Activated CD8-positive, alpha-beta T cell treated with anti-CD3 and anti-CD28 coated beads, Interleukin-2, amount 10 ng/mL, durations not matched to agents 7 days and 5 days (primary cell): ENCODE measurements at regions of chr19 and their contacts with region 1.

Region 1: GRCh38 chr19:13861732-13862531 is 15.0 kb upstream of the NANOS3 start:
- DNase-seq: peak; percentile 92
- ATAC-seq: peak; percentile 90
- H3K4me3 Mint-ChIP-seq: peak overlapping the region; percentile 87
- H3K27ac Mint-ChIP-seq: peak overlapping the region; percentile 88
- H3K4me1 Mint-ChIP-seq: peaks cover 50% of the 10 kb centered on the region
- H3K27me3 Mint-ChIP-seq: peaks cover 20% of the 10 kb centered on the region

Region 2: GRCh38 chr19:13748169-13748828 is 113.6 kb before region 1 on chr19:
- CTCF ChIA-PET with region 1: interaction called, 13 read pairs
- POLR2A ChIA-PET with region 1: interaction called, 4 read pairs
- DNase-seq: peak; percentile 30
- ATAC-seq: peak; percentile 3
- H3K4me3 Mint-ChIP-seq: peak overlapping the region; percentile 94
- H3K27ac Mint-ChIP-seq: peak overlapping the region; percentile 96
- H3K4me1 Mint-ChIP-seq: peaks cover 33% of the 10 kb centered on the region
- H3K27me3 Mint-ChIP-seq: no peaks in the 10 kb centered on the region

Region 3: GRCh38 chr19:13784731-13785452 is 77.0 kb before region 1 on chr19:
- CTCF ChIA-PET with region 1: interaction called, 71 read pairs
- POLR2A ChIA-PET with region 1: interaction called, 27 read pairs
- DNase-seq: peak; percentile 81
- ATAC-seq: peak; percentile 64
- H3K4me3 Mint-ChIP-seq: peak overlapping the region; percentile 31
- H3K27ac Mint-ChIP-seq: peak overlapping the region; percentile 72
- H3K4me1 Mint-ChIP-seq: peaks cover 43% of the 10 kb centered on the region
- H3K27me3 Mint-ChIP-seq: no peaks in the 10 kb centered on the region

Region 4: GRCh38 chr19:13833330-13834243 is 28.3 kb before region 1 on chr19:
- CTCF ChIA-PET with region 1: interaction called, 54 read pairs
- POLR2A ChIA-PET with region 1: interaction called, 49 read pairs
- DNase-seq: peak; percentile 93
- ATAC-seq: peak; percentile 64
- H3K4me3 Mint-ChIP-seq: peak overlapping the region; percentile 68
- H3K27ac Mint-ChIP-seq: peak overlapping the region; percentile 81
- H3K4me1 Mint-ChIP-seq: peaks cover 51% of the 10 kb centered on the region
- H3K27me3 Mint-ChIP-seq: no peaks in the 10 kb centered on the region

Region 5: DNA sequence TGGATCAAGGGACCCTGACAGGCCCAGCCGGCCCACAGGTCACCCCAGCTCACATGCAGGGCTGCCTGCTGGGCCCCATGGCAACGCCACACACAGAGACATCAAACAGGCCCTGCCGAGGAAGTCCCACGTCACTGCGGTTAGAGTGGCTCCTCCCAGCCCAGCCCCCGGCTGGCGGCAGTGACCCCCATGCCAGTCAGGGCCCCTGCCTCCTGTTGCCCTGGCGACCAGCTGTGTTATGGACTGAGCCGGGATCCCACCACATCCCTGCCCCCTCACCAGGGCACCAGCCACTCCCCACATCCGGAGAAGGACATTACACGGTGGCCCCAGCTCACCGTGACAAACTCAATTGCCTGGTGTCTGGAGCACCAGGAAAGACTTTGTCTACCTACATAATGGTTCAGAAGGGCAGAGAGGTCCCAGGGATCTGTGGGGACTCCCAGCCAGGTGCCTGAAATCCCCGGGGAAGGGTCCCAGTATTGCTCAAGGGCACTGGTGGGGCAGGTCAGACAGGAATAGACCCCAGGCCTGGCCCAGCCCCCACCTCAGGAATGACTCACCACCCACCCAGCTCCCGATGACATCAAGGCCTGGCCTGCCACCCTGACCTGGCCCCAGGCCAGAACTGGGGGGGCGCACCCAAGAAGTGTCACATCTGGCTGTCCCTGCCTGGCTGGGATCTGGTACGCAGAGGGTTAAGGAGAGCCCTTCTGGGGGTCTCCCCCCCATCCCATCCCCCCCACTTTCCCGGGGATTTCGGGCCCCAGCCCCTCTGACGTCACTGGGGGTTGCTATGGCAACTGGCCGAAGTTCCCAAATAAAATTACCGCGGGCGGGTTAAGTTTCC is 15.2 kb before region 1 on chr19:
- CTCF ChIA-PET with region 1: interaction called, 57 read pairs
- POLR2A ChIA-PET with region 1: interaction called, 49 read pairs
- DNase-seq: peak; percentile 97
- ATAC-seq: peak; percentile 61
- H3K4me3 Mint-ChIP-seq: peak overlapping the region; percentile 79
- H3K27ac Mint-ChIP-seq: peak overlapping the region; percentile 99
- H3K4me1 Mint-ChIP-seq: peaks cover 61% of the 10 kb centered on the region
- H3K27me3 Mint-ChIP-seq: no peaks in the 10 kb centered on the region